Vagina (tissue), 2 donors: ENCODE measurements at regions of chr7 and their contacts with region 1.

Region 1: GRCh38 chr7:100705753-100706671 is at the start of gene POP7:
- DNase-seq: peak in 1 of 2 donors; percentile 96
- H3K4me3 ChIP-seq: peak within 1 kb of the TSS; percentile 67 to 90
- H3K27ac ChIP-seq: peak within 1 kb of the TSS; percentile 94
- H3K4me1 ChIP-seq: peaks cover 22% of the 10 kb centered on the region
- H3K27me3 ChIP-seq: no peaks in the 10 kb centered on the region
- CTCF ChIP-seq: no peak
- POLR2A ChIP-seq: peak in 1 of 2 donors; percentile 23
- total RNA-seq, gene POP7: 44.0 TPM

Region 2: DNA sequence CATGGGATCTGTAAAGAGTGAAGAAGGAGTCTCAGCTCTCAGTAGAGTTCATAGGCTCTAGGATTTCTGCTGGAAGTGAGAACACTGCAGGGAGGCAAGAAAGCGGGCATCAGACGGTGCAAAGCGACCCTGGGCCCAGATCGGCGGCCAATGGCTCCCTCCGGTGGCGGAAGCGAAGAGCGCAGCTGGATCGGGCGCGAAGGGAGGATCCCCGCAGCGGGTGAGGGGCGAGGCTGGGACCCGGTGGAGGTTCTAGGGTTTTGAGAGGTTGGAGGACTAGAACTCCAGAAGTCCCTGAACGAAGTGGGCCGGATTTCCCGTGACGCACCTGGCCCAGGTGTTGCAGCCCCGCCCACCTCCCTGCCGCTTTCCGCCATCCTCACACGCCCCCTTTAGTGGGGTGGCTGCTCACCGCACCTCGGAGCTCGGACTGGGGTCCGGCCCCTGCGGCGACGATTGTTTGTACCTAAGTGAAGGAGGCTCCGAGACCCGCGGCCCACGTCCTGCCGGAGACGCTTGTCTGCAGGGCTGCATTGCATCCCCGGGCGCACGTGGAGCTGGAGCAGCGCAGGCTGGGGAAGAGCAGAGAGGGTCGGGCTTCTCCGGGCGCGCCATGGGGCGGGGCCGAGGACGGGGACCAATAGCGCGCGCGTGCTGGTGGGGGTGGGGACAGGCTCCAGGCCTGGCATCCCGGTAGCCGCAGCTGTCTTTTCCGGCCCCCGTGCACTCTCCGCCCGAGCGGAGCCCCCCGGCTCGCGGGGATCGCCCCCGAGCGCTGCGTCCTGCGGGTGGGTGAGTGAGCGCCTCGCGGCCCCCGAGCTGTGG is 146.2 kb after region 1 on chr7 and contains the start of gene SLC12A9:
- intact Hi-C with region 1: loop called (anchors 5 kb)
- DNase-seq: no peak
- H3K4me3 ChIP-seq: peak within 1 kb of the TSS; percentile 58 to 67
- H3K27ac ChIP-seq: peak within 1 kb of the TSS; percentile 7
- H3K4me1 ChIP-seq: peaks cover 28% of the 10 kb centered on the region
- H3K27me3 ChIP-seq: no peaks in the 10 kb centered on the region
- CTCF ChIP-seq: peak; percentile 74 to 99 (median 93)
- POLR2A ChIP-seq: peak in 1 of 2 donors; percentile 38
- total RNA-seq, gene SLC12A9: 15.7 TPM